Panc1 (cell line): ENCODE measurements at regions of chr5 and their contacts with region 1.

Region 1: DNA sequence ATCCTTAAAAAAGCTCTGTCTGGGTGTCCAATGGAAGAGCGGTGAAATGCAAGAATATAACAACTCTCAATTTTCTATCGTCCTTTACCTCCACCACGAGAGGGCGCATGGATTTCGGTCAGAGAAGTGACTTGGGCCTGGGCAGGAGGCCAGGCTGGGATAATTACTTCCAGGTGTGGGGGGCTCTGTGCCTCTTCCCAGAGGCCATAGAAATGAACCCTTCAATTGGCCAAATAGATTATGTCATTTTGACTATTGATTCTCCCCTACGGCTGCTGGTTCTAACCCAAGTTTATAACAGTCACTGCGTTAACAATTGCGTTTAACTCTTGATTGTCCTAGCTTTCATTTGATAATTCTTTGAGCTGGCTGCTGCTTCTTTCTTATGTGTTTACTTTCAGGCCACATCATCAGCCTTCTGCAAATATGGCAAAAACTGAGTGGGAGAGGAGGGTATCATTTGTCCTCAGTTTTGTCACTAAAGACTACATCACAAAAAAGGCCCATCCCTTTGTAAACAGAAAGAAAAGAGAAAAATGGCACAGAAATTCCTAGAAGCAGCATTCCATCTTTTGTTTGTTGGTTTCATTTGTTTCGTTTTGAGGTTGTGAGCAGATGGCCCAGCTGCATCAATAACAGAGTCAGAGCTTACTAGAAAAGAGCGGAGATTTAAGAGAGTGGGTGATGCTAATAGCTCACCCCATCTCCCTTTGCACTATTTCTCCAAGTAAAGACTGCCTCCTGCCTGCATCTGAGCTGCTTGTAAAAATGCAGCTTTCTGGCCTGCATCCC is 45.4 kb upstream of the ZFR start:
- DNase-seq: peak; percentile 43
- ATAC-seq: peak; percentile 87
- H3K4me3 ChIP-seq: no peak overlapping the region
- H3K27ac ChIP-seq: no peak overlapping the region
- H3K4me1 ChIP-seq: no peaks in the 10 kb centered on the region; the same call in 1 of the 2 replicates
- H3K27me3 ChIP-seq: no peaks in the 10 kb centered on the region
- CTCF ChIP-seq: peak; percentile 88

Region 2: DNA sequence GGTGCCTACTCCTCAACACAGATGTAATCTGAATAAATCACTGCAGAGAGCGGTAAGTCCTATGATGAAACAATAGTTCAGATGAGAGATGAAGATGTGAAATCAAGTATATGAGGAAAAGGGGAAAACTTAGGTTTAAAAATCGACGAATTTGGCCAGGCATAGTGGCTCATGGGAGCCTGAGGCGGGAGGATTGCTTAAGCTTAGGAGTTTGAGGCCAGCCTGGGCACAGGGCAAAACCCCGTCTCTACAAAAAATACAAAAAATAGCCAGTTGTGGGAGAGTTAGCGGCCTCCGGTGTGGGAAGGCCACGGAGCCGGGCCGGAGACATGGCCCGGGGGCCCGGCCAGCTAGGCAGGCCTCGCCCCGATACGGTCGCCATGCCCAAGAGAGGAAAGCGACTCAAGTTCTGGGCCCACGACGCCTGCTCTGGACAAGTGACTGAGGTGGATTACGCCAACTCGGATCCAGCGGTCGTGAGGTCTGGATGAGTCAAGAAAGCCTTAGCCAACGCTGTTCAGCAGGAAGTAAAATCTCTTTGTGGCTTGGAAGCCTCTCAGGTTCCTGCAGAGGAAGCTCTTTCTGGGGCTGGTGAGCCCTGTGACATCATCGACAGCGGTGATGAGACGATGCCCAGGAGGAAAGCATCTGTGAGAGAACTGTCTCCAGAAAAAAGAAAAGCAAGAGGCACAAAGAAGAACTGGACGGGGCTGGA is 32.6 kb after region 1 on chr5:
- CTCF ChIA-PET with region 1: no interaction called
- POLR2A ChIA-PET with region 1: interaction called, 11 read pairs
- in situ Hi-C with region 1: no loop called
- intact Hi-C with region 1: no loop called
- DNase-seq: no peak
- ATAC-seq: no peak
- H3K4me3 ChIP-seq: no peak overlapping the region
- H3K27ac ChIP-seq: no peak overlapping the region
- H3K4me1 ChIP-seq: no peaks in the 10 kb centered on the region
- H3K27me3 ChIP-seq: no peaks in the 10 kb centered on the region
- CTCF ChIP-seq: no peak

Region 3: DNA sequence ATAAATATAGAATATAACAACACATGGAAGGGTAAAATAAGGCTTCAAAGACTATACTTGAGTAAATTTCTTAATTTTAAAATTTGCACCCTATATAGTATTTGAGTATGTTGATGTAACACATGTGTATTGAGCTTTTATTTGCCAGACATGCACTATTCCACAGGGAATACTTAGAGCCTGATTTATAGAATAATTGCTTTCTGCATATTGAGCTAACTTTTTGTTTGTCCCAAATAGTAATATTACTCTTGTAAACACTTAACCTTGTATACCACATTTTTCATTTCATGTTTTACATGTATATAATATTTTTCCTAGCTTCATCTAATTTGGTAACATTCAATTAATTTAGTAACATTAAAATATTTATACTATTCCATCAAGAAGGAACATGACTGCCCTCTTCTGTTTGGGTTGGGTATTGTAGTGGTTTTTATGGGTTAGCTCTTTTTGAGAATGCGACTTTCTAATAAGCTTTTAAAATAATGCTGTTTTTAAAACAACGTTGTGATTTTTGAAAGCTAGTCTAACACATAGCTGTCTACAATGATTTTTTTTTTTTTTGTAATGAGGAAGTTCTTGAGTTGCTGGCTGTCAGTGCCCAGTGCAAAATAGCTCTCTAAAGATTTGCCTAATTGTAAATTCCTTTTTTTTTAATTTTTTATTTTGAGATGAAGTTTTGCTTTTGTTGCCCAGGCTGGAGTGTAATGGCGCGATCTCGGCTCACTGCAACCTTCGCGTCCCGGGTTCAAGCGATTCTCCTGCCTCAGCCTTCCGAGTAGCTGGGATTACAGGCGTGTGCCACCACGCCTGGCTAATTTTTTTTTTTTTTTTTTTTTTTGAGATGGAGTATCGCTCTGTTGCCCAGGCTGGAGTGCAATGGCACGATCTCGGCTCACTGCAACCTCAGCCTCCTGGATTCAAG is 100.2 kb after region 1 on chr5:
- CTCF ChIA-PET with region 1: interaction called, 41 read pairs
- POLR2A ChIA-PET with region 1: interaction called, 10 read pairs
- in situ Hi-C with region 1: no loop called
- intact Hi-C with region 1: loop called (anchors 1 kb)
- DNase-seq: no peak
- ATAC-seq: no peak
- H3K4me3 ChIP-seq: no peak overlapping the region
- H3K27ac ChIP-seq: no peak overlapping the region
- H3K4me1 ChIP-seq: peaks cover 8% of the 10 kb centered on the region
- H3K27me3 ChIP-seq: no peaks in the 10 kb centered on the region
- CTCF ChIP-seq: peak; percentile 70

Region 4: DNA sequence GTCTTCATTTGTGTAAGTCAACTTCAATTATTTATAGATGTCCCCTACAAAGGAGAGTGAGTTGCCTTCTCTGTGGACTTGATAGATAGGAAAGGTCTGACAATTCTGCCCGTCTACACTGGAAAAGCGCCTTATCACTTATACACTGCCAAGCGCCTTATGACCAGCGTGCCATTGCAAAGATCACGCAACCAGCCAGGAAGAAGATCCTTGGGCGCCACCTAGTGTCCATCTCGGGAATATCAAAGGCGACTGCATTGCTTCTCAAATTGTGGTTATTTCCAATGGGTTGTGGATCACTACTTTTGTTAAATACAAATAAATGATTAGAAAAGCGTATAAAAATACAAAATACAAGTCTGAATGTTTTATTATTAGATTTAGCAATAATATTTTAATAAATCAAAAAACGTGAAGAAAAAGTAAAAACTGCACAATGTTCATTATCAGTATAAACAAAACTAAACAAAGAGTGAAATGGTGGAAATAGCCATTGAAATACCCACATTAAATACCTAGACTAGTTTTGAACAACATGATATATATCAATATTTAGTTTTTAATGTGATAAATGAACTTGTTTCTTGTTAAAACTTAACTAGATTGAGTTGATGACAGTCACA is 123.2 kb after region 1 on chr5:
- CTCF ChIA-PET with region 1: interaction called, 3 read pairs
- POLR2A ChIA-PET with region 1: no interaction called
- in situ Hi-C with region 1: no loop called
- intact Hi-C with region 1: loop called (anchors 2 kb)
- DNase-seq: peak; percentile 69
- ATAC-seq: peak; percentile 83
- H3K4me3 ChIP-seq: no peak overlapping the region
- H3K27ac ChIP-seq: no peak overlapping the region
- H3K4me1 ChIP-seq: no peaks in the 10 kb centered on the region
- H3K27me3 ChIP-seq: no peaks in the 10 kb centered on the region
- CTCF ChIP-seq: peak; percentile 94